Activated naive CD8-positive, alpha-beta T cell treated with anti-CD3 and anti-CD28 coated beads, Interleukin-2, amount 10 ng/mL, durations not matched to agents 7 days and 5 days (primary cell): ENCODE measurements at regions of chr3 and their contacts with region 1.

Region 1: GRCh38 chr3:150763122-150763841 is at the start of gene SIAH2:
- DNase-seq: peak; percentile 95
- ATAC-seq: peak; percentile 81
- H3K4me3 Mint-ChIP-seq: peak within 1 kb of the TSS; percentile 99
- H3K27ac Mint-ChIP-seq: peak within 1 kb of the TSS; percentile 99
- H3K4me1 Mint-ChIP-seq: peaks cover 32% of the 10 kb centered on the region
- H3K27me3 Mint-ChIP-seq: no peaks in the 10 kb centered on the region
- total RNA-seq, gene SIAH2: 28.3 TPM

Region 2: DNA sequence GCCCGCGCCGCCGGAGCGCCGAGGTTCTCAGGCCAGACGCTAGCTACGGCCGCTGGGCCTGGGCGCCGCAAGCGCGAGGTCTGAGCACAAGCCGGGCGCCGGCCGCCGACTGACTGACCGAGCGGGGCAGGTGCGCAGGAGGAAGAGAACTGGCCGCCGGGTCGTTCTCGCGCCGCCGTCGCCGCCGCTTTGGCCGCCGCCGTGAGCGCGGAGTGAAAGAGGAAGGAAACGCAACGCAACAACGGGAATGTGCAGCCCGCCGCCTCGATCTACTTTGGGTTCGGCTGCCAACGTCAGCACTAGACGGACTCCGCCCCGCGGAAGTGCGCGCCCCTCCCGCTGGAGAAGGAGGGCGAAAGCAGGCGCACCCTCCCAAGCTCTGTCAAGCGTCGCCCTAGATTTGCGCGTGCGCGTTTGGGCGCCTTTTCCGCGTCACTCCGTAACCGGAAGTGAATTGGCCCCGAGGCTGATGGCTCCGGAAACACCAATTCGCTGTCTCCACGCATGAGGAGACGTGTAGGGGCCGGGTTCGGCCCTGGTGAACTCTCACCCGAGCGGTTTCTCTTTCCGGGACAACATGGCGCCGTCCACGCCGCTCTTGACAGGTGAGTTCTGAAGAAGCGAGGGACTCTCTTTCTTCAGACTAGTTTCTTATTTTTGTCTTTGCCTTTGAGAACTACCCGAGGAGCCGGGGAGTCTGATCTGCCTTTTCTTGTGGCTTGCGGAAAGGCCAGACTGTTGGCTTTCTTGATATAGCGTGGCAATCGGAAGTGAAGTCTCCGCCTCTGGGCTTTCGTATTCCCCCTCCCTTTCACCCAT is 216.8 kb before region 1 on chr3 and contains the starts of genes EIF2A and SERP1:
- POLR2A ChIA-PET with region 1: interaction called, 85 read pairs
- DNase-seq: peak; percentile 98
- ATAC-seq: peak; percentile 92
- H3K4me3 Mint-ChIP-seq: peak within 1 kb of the TSS; percentile 100
- H3K27ac Mint-ChIP-seq: peak within 1 kb of the TSS; percentile 96
- H3K4me1 Mint-ChIP-seq: peaks cover 46% of the 10 kb centered on the region
- H3K27me3 Mint-ChIP-seq: no peaks in the 10 kb centered on the region
- total RNA-seq, gene EIF2A: 82.2 to 84.2 TPM
- total RNA-seq, gene SERP1: 89.4 to 89.8 TPM

Region 3: GRCh38 chr3:150666167-150666566 is 97.1 kb before region 1 on chr3:
- POLR2A ChIA-PET with region 1: interaction called, 22 read pairs
- DNase-seq: peak; percentile 48
- ATAC-seq: peak; percentile 94
- H3K4me3 Mint-ChIP-seq: peak overlapping the region; percentile 47
- H3K27ac Mint-ChIP-seq: peak overlapping the region; percentile 18
- H3K4me1 Mint-ChIP-seq: peaks cover 25% of the 10 kb centered on the region
- H3K27me3 Mint-ChIP-seq: peaks cover 31% of the 10 kb centered on the region

Region 4: DNA sequence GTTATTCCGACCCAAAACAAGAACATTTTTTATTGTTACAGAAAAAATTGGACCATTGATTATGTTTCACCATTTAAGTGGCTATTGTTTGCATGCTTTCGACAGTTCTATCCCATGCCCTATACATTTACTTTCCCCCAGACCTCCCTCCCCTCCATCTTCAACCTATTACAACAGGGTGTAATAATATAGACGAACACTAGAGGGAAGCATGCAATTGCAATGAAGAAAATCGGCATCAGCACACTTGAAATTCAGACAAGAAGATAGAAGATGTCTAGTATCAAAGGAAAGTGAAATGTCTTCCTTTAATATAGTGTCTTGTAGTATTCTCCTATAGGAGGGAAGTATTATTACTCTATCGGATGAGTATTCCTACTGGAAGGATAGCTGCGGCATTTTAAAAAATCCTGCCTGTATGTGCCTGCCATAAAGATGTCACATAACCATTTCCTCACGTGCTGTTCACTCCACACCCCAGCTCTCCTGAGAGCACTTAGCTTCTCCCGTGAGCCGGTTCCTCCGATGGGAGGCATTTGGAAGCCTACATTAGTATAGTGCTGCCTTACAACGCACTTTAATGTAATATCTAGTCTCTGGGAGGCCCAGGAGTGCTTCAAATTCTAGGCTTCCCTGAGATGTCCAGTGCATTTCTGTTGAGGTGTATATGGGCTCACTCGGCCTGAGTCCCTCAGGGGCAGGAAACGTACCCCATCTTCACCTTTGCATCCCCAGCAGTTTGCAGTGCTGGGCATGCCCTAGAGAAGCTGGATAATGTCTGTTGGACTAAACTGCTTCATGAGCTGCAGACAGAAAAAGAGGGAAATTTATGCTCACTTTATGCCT is 41.8 kb before region 1 on chr3:
- POLR2A ChIA-PET with region 1: interaction called, 19 read pairs
- DNase-seq: no peak
- ATAC-seq: peak; percentile 79
- H3K4me3 Mint-ChIP-seq: no peak overlapping the region
- H3K27ac Mint-ChIP-seq: no peak overlapping the region
- H3K4me1 Mint-ChIP-seq: peaks cover 12% of the 10 kb centered on the region
- H3K27me3 Mint-ChIP-seq: no peaks in the 10 kb centered on the region